ENCODE measurements at regions of chr11 and their contacts with region 1.

Region 1: DNA sequence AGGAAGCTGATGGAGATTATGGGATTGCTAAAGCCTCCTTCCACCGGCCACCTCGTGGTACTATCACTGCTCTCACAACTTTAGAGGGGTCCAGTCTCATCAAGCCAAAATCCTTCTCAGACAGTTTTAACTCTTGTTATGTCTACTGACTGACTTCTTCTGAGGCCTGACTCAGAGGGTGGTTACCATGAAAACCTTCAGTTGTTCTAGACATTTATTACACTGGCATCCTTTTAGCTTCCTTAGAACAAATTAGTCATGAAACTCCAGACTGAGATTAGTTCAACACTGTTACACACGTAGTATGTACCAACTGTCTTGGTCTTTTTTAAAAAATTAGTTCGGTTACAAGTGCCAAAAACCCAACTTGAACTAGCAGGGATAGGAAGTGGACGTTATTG is 7.5 kb downstream of the DIXDC1 start:
- DNase-seq: no peak
- H3K4me3 ChIP-seq: no peak overlapping the region
- H3K27ac ChIP-seq: peak overlapping the region; percentile 24 to 71 (median 63)
- H3K4me1 ChIP-seq: peaks cover 0 to 28% (median 16%) of the 10 kb centered on the region in 3 donors
- H3K27me3 ChIP-seq: no peaks in the 10 kb centered on the region
- CTCF ChIP-seq: no peak
- POLR2A ChIP-seq: no peak

Region 2: GRCh38 chr11:111977146-111978027 is 32.7 kb after region 1 on chr11:
- intact Hi-C with region 1: loop called (anchors 5 kb)
- DNase-seq: no peak
- H3K4me3 ChIP-seq: peak overlapping the region; percentile 61 to 89 (median 62)
- H3K27ac ChIP-seq: peak overlapping the region; percentile 71 to 96 (median 90)
- H3K4me1 ChIP-seq: peaks cover 10 to 67% (median 25%) of the 10 kb centered on the region in 3 donors
- H3K27me3 ChIP-seq: no peaks in the 10 kb centered on the region
- CTCF ChIP-seq: peak in 1 of 6 experiments; percentile 6
- POLR2A ChIP-seq: peak in 2 of 4 donors; percentile 42 to 50

Measured in esophagus squamous epithelium (tissue), 5 donors.